IMR-90 (cell line): ENCODE measurements at regions of chr5 and their contacts with region 1.

Region 1: GRCh38 chr5:88680253-88681132 is 202.5 kb downstream of the MEF2C start:
- DNase-seq: peak; percentile 14
- ATAC-seq: peak; percentile 96
- H3K4me3 ChIP-seq: peak overlapping the region; percentile 32
- H3K27ac ChIP-seq: no peak overlapping the region
- H3K4me1 ChIP-seq: peaks cover 2% of the 10 kb centered on the region; the same call in 1 of the 2 replicates
- H3K27me3 ChIP-seq: peaks cover 77% of the 10 kb centered on the region
- CTCF ChIP-seq: peak; percentile 83
- POLR2A ChIP-seq: no peak
- RAD21 ChIP-seq: peak; percentile 77

Region 2: GRCh38 chr5:87421307-87421706 is 1259.2 kb before region 1 on chr5:
- CTCF ChIA-PET with region 1: no interaction called
- POLR2A ChIA-PET with region 1: no interaction called
- dilution Hi-C with region 1: no loop called
- in situ Hi-C with region 1: loop called (anchors 10 kb)
- intact Hi-C with region 1: no loop called
- DNase-seq: no peak
- ATAC-seq: no peak
- H3K4me3 ChIP-seq: no peak overlapping the region
- H3K27ac ChIP-seq: no peak overlapping the region
- H3K4me1 ChIP-seq: no peaks in the 10 kb centered on the region
- H3K27me3 ChIP-seq: no peaks in the 10 kb centered on the region
- CTCF ChIP-seq: no peak
- POLR2A ChIP-seq: no peak
- RAD21 ChIP-seq: no peak

Region 3: GRCh38 chr5:88140856-88141752 is 539.4 kb before region 1 on chr5:
- CTCF ChIA-PET with region 1: no interaction called
- POLR2A ChIA-PET with region 1: no interaction called
- dilution Hi-C with region 1: no loop called
- in situ Hi-C with region 1: loop called (anchors 5 kb)
- intact Hi-C with region 1: loop called (anchors 1 kb)
- DNase-seq: peak; percentile 93
- ATAC-seq: peak; percentile 97
- H3K4me3 ChIP-seq: peak overlapping the region; percentile 44
- H3K27ac ChIP-seq: no peak overlapping the region
- H3K4me1 ChIP-seq: no peaks in the 10 kb centered on the region
- H3K27me3 ChIP-seq: peaks cover 50% of the 10 kb centered on the region
- CTCF ChIP-seq: peak; percentile 68
- POLR2A ChIP-seq: no peak
- RAD21 ChIP-seq: peak; percentile 38